ENCODE measurements at regions of chr12 and their contacts with region 1.

Region 1: DNA sequence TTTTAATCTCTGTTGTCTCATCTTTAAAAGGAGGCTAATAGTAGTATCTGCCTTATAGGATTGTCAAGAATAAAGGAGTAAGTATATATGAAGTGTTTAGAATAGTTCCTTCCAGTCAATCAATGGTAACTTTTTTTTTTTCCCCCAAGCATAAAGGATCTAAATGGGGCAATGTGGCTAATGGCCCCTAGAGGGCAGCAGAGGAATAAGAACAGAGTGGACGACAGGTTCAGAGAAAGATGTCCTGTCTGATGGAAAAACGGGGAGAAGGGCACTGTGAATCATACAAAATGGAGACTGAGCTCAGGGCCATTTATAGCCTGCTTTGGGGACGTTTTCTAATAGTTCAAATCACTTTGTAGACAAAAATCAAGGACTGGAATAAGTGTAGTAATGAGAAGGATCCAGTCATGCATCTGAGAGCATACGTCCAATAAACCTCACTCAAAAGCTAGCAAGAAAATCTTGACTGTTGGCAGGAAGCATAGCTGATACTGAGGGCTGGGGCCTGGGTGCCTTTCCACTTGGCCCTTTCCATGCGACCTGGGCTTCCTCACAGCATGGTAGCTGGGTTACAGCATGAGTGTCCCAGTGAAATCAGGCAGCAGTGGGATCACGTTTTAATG is 51.3 kb downstream of the IFNG-AS1 start:
- DNase-seq: peak; percentile 68 to 76
- H3K4me3 ChIP-seq: no peak overlapping the region
- H3K4me3 Mint-ChIP-seq: no peak overlapping the region
- H3K27ac Mint-ChIP-seq: no peak overlapping the region
- H3K4me1 ChIP-seq: no peaks in the 10 kb centered on the region
- H3K4me1 Mint-ChIP-seq: peaks cover 6% of the 10 kb centered on the region
- H3K27me3 ChIP-seq: no peaks in the 10 kb centered on the region
- H3K27me3 Mint-ChIP-seq: no peaks in the 10 kb centered on the region
- CTCF ChIP-seq: peak; percentile 90 to 92

Region 2: DNA sequence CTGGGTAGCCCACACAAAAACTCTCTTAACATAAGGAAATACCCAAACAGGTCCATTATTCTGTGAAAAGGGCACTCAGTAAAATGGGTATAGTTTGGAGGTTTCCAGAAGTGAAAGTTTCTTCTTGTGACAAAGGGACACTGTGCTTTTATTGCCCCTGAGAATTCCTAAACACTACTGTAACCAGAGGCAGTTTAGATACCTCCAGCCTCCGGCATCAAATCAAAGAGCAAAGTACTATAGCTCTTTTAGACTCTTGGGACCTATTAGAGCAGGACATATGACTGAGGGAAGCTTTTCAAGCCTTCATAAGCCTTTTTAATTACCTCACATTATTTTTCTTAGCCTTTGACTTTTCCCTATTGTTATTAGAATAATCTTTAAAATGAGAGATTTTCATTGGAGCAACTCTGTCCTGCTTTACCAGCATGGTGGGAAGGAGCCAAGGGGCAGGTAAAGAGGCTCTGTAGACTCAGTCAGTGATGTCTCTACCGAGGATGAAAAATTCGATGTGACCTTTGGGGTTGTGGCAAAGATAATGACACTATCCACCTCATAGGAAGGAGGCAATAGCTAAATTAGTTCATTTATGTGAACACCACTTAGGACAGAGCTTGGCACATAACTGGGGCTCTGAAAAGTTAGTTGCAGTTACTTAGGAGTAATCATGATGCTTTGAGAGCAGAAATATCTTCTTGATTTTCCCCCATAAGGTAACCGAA is 33.9 kb after region 1 on chr12:
- CTCF ChIA-PET with region 1: interaction called, 3 read pairs
- POLR2A ChIA-PET with region 1: no interaction called
- intact Hi-C with region 1: loop called (anchors 2 kb)
- DNase-seq: no peak
- H3K4me3 ChIP-seq: no peak overlapping the region
- H3K4me3 Mint-ChIP-seq: no peak overlapping the region
- H3K27ac Mint-ChIP-seq: peak overlapping the region; percentile 56
- H3K4me1 ChIP-seq: peaks cover 26% of the 10 kb centered on the region
- H3K4me1 Mint-ChIP-seq: peaks cover 23% of the 10 kb centered on the region
- H3K27me3 ChIP-seq: no peaks in the 10 kb centered on the region
- H3K27me3 Mint-ChIP-seq: no peaks in the 10 kb centered on the region
- CTCF ChIP-seq: no peak

Region 3: GRCh38 chr12:68119724-68120211 is 79.2 kb after region 1 on chr12:
- CTCF ChIA-PET with region 1: no interaction called
- POLR2A ChIA-PET with region 1: no interaction called
- intact Hi-C with region 1: loop called (anchors 5 kb)
- DNase-seq: no peak
- H3K4me3 ChIP-seq: no peak overlapping the region
- H3K4me3 Mint-ChIP-seq: no peak overlapping the region
- H3K27ac Mint-ChIP-seq: no peak overlapping the region
- H3K4me1 ChIP-seq: no peaks in the 10 kb centered on the region
- H3K4me1 Mint-ChIP-seq: no peaks in the 10 kb centered on the region
- H3K27me3 ChIP-seq: no peaks in the 10 kb centered on the region
- H3K27me3 Mint-ChIP-seq: peaks cover 3% of the 10 kb centered on the region
- CTCF ChIP-seq: no peak

Region 4: GRCh38 chr12:68158432-68158831 is 117.9 kb after region 1 on chr12:
- CTCF ChIA-PET with region 1: interaction called, 17 read pairs
- POLR2A ChIA-PET with region 1: no interaction called
- intact Hi-C with region 1: loop called (anchors 1 kb)
- DNase-seq: peak in 1 of 2 experiments; percentile 18
- H3K4me3 ChIP-seq: no peak overlapping the region
- H3K4me3 Mint-ChIP-seq: no peak overlapping the region
- H3K27ac Mint-ChIP-seq: no peak overlapping the region
- H3K4me1 ChIP-seq: no peaks in the 10 kb centered on the region
- H3K4me1 Mint-ChIP-seq: no peaks in the 10 kb centered on the region
- H3K27me3 ChIP-seq: no peaks in the 10 kb centered on the region
- H3K27me3 Mint-ChIP-seq: no peaks in the 10 kb centered on the region
- CTCF ChIP-seq: peak; percentile 18 to 50

Region 5: DNA sequence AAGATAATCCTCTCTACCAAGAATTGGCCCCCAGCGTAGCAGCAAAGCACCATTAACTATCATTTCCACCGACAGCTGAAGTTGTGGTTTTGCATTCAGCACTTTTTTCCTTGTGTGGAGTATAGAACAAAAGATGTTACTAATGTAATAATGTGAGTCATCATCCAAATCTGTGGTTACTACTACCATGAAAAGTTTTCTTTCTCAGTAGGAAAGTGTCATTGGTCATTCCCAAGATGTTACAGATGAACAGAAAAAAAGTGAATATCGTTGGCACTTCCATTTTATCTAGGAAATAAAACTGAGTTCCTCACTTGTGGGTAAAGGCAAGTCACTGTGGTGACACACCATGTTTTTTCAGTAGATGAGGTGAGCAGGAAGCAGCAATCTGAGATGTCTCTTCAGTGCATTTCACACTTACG is 149.3 kb after region 1 on chr12:
- CTCF ChIA-PET with region 1: no interaction called
- POLR2A ChIA-PET with region 1: no interaction called
- intact Hi-C with region 1: loop called (anchors 5 kb)
- DNase-seq: no peak
- H3K4me3 ChIP-seq: no peak overlapping the region
- H3K4me3 Mint-ChIP-seq: no peak overlapping the region
- H3K27ac Mint-ChIP-seq: no peak overlapping the region
- H3K4me1 ChIP-seq: no peaks in the 10 kb centered on the region
- H3K4me1 Mint-ChIP-seq: peaks cover 8% of the 10 kb centered on the region
- H3K27me3 ChIP-seq: no peaks in the 10 kb centered on the region
- H3K27me3 Mint-ChIP-seq: peaks cover 10% of the 10 kb centered on the region
- CTCF ChIP-seq: no peak

Region 6: GRCh38 chr12:68223083-68223747 is 182.7 kb after region 1 on chr12:
- CTCF ChIA-PET with region 1: interaction called, 9 read pairs
- POLR2A ChIA-PET with region 1: no interaction called
- intact Hi-C with region 1: loop called (anchors 1 kb)
- DNase-seq: peak; percentile 79
- H3K4me3 ChIP-seq: no peak overlapping the region
- H3K4me3 Mint-ChIP-seq: no peak overlapping the region
- H3K27ac Mint-ChIP-seq: no peak overlapping the region
- H3K4me1 ChIP-seq: no peaks in the 10 kb centered on the region
- H3K4me1 Mint-ChIP-seq: no peaks in the 10 kb centered on the region
- H3K27me3 ChIP-seq: no peaks in the 10 kb centered on the region; the same call in 1 of the 2 replicates
- H3K27me3 Mint-ChIP-seq: peaks cover 14% of the 10 kb centered on the region
- CTCF ChIP-seq: peak; percentile 87

Measured in Caco-2 (cell line).